ENCODE measurements at regions of chr4 and their contacts with region 1.

Region 1: DNA sequence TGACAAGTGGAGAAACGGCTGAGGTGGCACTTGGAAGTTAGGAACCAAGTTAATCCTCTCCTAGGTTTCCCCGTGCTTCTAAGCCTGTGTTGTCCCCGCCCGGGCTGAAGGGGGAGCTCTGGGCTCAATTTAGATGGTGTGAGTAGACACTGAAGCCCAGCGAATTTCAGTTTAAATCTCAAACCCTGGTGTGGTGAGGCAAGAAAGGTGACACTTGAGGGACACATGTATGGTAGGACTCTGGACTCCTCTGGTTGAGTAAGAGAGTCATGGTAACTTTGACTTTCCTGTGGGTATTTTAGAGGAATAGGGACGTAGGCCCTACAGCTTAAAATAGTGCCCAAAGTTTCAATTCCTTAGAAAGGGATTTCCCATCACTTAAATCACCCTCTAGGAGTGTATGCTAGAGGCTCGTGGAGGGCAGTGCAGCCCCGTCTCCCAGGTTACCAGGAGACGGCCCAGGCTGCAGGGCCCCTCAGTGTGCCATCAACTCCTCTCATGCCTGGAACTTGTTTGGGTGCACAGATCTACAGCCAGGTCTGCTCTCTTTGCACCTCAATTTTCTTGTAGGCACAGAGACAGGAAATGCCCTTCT is 24.0 kb downstream of the HAND2 start:
- DNase-seq: peak; percentile 21
- ATAC-seq: peak; percentile 94
- H3K4me3 ChIP-seq: no peak overlapping the region
- H3K27ac ChIP-seq: no peak overlapping the region
- H3K4me1 ChIP-seq: no peaks in the 10 kb centered on the region
- H3K27me3 ChIP-seq: peaks cover 4 to 42% of the 10 kb centered on the region in 2 experiments; a peak in 4 of 5 replicates
- CTCF ChIP-seq: peak; percentile 81
- EP300 ChIP-seq: no peak
- POLR2A ChIP-seq: no peak
- RAD21 ChIP-seq: peak; percentile 39

Region 2: GRCh38 chr4:173752610-173753230 is 246.7 kb after region 1 on chr4:
- CTCF ChIA-PET with region 1: no interaction called
- POLR2A ChIA-PET with region 1: no interaction called
- in situ Hi-C with region 1: no loop called
- intact Hi-C with region 1: loop called (anchors 5 kb)
- DNase-seq: peak; percentile 18
- ATAC-seq: no peak
- H3K4me3 ChIP-seq: no peak overlapping the region
- H3K27ac ChIP-seq: no peak overlapping the region
- H3K4me1 ChIP-seq: no peaks in the 10 kb centered on the region
- H3K27me3 ChIP-seq: no peaks in the 10 kb centered on the region
- CTCF ChIP-seq: peak; percentile 61
- EP300 ChIP-seq: no peak
- POLR2A ChIP-seq: no peak
- RAD21 ChIP-seq: no peak

Region 3: DNA sequence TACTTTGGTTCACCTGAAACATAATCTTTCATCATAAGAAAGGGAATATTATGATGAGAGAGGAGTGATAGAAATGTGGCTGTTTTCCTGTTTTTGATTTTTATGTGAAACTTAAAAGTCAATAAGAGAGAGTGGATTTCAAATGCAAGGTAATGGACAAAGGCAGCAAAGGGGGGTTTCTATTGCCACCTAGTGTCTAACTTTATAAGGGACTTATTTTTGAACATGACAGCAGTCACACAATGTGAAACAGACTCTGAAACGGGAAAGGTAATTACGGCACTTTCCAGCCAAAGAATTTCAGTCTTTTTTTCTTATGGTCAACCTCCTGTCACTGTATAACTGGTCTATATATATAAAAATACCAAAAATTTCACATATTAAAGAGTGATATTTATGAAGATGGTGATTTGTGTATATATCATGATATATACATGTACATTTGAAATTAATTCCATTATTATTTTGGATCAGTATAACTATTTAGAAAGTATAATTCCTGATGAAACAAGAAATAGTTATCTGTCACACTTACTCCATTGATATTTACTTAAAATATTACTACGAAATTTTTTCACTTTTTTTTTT is 650.3 kb after region 1 on chr4:
- CTCF ChIA-PET with region 1: interaction called, 8 read pairs
- POLR2A ChIA-PET with region 1: no interaction called
- in situ Hi-C with region 1: loop called (anchors 10 kb)
- intact Hi-C with region 1: loop called (anchors 2 kb)
- DNase-seq: peak; percentile 23
- ATAC-seq: peak; percentile 77
- H3K4me3 ChIP-seq: no peak overlapping the region
- H3K27ac ChIP-seq: no peak overlapping the region
- H3K4me1 ChIP-seq: no peaks in the 10 kb centered on the region
- H3K27me3 ChIP-seq: no peaks in the 10 kb centered on the region
- CTCF ChIP-seq: peak; percentile 66
- EP300 ChIP-seq: no peak
- POLR2A ChIP-seq: no peak
- RAD21 ChIP-seq: no peak

Measured in HepG2 (cell line).